ENCODE measurements at regions of chr4 and their contacts with region 1.

Region 1: DNA sequence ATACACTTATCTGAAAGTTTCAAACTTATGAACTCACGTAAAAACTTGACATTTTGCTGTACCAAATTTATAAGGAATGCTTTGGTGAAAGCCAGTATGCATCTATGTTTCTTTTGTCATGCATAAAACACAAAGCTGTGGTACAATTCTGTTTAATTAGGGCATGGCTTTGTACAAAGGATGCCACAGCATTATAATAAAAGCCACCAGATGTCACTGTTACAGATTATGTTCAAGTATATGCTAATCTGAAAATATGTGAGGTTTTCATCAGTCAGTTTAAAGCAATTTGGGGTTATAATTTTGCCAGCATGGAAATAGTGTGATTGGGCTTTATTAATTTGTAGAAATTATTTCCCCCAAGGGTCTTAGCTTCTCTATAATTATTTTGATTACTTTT is 69.0 kb downstream of the ATOH1 start:
- DNase-seq: peak; percentile 14
- H3K4me3 ChIP-seq: no peak overlapping the region
- H3K27ac ChIP-seq: no peak overlapping the region
- H3K4me1 ChIP-seq: no peaks in the 10 kb centered on the region
- H3K27me3 ChIP-seq: no peaks in the 10 kb centered on the region
- CTCF ChIP-seq: peak; percentile 47

Region 2: DNA sequence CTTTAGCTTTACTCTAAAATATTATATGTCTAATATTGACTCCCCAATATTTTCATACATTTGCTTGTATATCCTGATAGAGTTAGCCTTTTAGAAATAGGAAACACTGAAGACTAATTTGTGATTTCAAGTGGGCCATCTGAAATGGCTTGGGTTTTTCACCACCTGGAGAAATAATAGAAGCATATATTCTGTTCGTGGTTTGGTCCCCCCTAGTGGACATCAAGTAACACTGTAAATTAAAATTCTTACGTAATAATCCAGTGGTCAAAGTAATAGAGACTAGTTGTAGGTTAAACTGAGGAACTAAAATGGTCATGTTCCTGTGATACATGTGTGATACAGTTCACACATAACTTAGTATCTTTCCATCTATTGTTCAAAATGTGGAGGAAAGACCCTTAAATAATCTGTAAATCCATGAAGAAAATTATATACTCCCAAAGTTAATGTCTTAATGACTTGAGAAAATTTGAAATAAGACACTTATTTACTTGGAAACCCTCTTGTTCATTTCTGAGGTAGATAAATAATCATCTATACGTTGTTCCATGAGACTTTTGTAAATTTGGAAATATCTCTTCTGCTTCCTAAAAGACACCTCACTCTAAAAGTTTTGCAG is 230.3 kb after region 1 on chr4:
- CTCF ChIA-PET with region 1: no interaction called
- POLR2A ChIA-PET with region 1: no interaction called
- intact Hi-C with region 1: loop called (anchors 2 kb)
- DNase-seq: peak; percentile 40
- H3K4me3 ChIP-seq: no peak overlapping the region
- H3K27ac ChIP-seq: no peak overlapping the region
- H3K4me1 ChIP-seq: no peaks in the 10 kb centered on the region
- H3K27me3 ChIP-seq: no peaks in the 10 kb centered on the region
- CTCF ChIP-seq: peak; percentile 54

Measured in A673 (cell line).